ENCODE measurements at regions of chr12 and their contacts with region 1.

Region 1: DNA sequence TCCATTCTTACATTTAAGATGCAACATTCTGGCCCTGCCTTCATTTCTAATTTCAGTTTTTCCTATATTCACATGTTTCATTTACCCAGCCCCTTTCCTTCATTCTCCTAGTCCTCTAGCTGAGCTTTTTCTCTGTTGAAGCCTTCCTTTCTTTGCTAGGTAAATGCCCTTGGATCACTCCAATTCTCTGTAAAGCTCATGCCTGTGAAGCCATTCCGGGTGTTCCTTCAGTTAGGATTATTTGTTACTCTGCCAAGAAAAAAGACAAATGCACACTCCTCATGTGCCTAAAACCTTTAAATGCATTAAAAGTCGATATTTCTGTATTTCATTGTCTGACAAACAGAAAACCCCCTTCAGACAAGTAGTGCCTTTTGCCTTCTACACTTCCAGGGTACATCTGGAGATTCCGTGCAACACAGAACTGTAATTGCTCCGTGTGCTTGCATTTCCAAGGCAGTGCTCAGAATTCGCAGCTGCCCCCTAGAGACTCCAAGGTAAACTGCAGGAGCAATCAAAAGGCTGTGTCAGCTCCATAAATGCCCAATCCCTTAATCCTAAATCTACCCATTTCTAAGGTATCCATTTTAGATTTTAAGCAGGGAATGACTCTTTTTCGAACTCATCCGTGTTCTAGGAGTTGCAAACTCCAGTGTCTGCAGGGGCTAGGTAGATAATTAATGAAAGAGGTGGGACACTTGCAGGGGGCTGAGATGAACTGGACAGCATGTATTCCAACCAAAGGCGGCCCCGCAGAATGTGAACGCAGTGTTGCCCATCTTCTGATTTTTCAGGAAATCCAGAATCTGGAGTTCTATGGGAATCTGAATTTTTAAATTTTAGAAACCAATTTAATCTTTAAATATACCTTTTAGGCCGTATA is 320.2 kb downstream of the GRIN2B start:
- DNase-seq: peak; percentile 70
- H3K4me3 Mint-ChIP-seq: no peak overlapping the region
- H3K27ac Mint-ChIP-seq: no peak overlapping the region
- H3K4me1 Mint-ChIP-seq: no peaks in the 10 kb centered on the region
- H3K27me3 Mint-ChIP-seq: peaks cover 4% of the 10 kb centered on the region

Region 2: GRCh38 chr12:13289653-13290289 is 371.5 kb before region 1 on chr12:
- intact Hi-C with region 1: loop called (anchors 10 kb)
- DNase-seq: no peak
- H3K4me3 Mint-ChIP-seq: no peak overlapping the region
- H3K27ac Mint-ChIP-seq: no peak overlapping the region
- H3K4me1 Mint-ChIP-seq: no peaks in the 10 kb centered on the region
- H3K27me3 Mint-ChIP-seq: peaks cover 9% of the 10 kb centered on the region

Region 3: GRCh38 chr12:13627536-13627935 is 33.7 kb before region 1 on chr12:
- intact Hi-C with region 1: no loop called
- DNase-seq: no peak
- H3K4me3 Mint-ChIP-seq: no peak overlapping the region
- H3K27ac Mint-ChIP-seq: no peak overlapping the region
- H3K4me1 Mint-ChIP-seq: no peaks in the 10 kb centered on the region
- H3K27me3 Mint-ChIP-seq: peaks cover 4% of the 10 kb centered on the region

Region 4: DNA sequence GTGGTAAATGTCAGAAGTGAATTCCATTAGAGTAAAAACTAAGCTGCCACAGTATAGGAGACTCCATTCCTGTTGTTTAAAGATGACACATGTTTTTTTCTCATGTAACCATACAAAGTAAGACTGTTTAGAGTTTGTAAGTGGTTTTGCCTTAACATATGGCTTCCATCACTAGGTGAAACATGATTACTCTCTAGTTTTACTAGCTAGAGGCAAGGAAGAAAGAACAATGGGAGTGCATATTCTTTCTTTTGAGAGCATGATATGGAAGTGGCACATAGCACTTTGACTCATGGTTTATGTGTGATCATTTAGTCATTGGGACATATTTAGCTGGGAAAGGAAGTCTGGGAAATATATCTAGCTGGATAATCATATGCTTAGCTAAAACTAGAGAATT is 712.0 kb after region 1 on chr12:
- intact Hi-C with region 1: no loop called
- DNase-seq: no peak
- H3K4me3 Mint-ChIP-seq: peak overlapping the region; percentile 7
- H3K27ac Mint-ChIP-seq: peak overlapping the region; percentile 26
- H3K4me1 Mint-ChIP-seq: peaks cover 38% of the 10 kb centered on the region
- H3K27me3 Mint-ChIP-seq: no peaks in the 10 kb centered on the region

Measured in activated CD4-positive, alpha-beta T cell treated with anti-CD3 and anti-CD28 coated beads, Interleukin-2, amount 10 ng/mL, durations not matched to agents 24 days and 14 days (primary cell).